A673 (cell line): ENCODE measurements at regions of chr10 and their contacts with region 1.

Region 1: DNA sequence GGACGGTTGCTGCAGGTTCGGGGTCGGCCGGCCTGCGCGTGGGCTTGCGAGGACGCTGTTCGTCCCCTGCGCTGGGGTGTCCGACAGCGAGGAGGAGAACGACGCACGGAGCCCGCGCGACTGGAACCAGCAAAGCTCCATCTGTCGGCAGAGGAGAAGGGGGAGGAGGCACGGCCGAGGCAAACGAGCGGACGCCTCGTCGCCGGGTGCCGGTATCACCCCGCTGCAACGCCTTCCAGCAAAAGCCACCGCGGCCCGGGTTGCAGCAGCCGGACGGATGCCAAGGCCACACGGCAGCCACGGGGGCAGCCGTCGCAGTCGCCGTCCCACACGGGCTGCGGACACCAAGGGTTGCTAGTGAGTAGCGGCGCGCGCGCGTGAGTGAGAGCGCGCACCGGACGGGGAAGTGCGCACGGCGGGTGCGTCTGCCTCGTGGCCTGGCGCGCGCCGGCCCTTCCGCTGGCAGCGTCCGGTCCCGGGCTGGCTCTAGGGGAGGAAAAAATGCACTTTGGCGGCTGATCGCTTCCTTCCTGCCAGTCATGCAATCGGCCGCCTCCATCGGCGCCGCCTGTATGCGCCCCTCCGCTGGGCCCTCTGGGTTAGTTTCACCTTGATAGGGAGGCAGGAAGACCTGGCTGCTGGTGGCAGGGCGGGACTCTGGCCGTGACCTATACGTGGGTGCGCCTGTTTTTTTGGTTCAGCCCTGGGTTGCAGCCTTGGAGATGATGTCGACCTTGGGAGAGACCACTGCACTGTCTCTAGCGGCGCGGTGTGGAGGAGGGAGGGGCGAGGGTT is 434 bp downstream of the STAMBPL1 start:
- DNase-seq: peak; percentile 84
- H3K4me3 ChIP-seq: peak overlapping the region; percentile 90
- H3K27ac ChIP-seq: peak overlapping the region; percentile 92
- H3K4me1 ChIP-seq: peaks cover 61% of the 10 kb centered on the region
- H3K27me3 ChIP-seq: no peaks in the 10 kb centered on the region
- CTCF ChIP-seq: peak; percentile 46

Region 2: DNA sequence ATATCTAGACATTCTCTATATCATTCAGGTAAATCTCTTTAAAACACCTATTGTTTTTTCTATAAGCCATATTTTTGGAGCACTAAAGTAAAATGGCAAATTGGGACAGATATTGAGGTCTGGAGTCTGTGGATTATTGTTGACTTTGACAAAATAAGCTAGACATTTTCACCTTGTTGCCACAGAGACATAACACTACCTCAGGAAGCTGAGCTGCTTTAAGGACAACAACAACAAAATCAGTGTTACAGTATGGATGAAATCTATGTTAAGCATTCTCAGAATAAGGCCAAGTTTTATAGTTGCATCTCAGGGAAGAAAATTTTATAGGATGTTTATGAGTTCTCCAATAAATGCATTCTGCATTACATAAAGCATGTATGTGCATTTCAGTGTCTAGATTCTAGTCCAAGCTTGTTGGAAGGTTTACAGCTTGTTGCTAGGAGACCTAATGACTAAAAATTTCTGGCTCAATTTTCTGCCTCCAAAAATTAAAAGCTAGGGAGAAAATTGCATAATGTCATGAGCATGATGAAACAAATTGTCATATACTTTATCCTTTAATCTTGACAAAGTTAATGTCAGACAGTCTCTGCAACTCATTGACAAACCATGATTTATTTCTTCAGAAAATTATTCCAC is 59.6 kb before region 1 on chr10:
- CTCF ChIA-PET with region 1: no interaction called
- POLR2A ChIA-PET with region 1: no interaction called
- intact Hi-C with region 1: no loop called
- DNase-seq: peak; percentile 41
- H3K4me3 ChIP-seq: no peak overlapping the region
- H3K27ac ChIP-seq: peak overlapping the region; percentile 51
- H3K4me1 ChIP-seq: peaks cover 26% of the 10 kb centered on the region
- H3K27me3 ChIP-seq: no peaks in the 10 kb centered on the region
- CTCF ChIP-seq: no peak

Region 3: GRCh38 chr10:88990384-88991160 is 110.1 kb after region 1 on chr10 and contains the start of gene FAS:
- CTCF ChIA-PET with region 1: no interaction called
- POLR2A ChIA-PET with region 1: no interaction called
- intact Hi-C with region 1: loop called (anchors 2 kb)
- DNase-seq: peak; percentile 66
- H3K4me3 ChIP-seq: peak within 1 kb of the TSS; percentile 89
- H3K27ac ChIP-seq: peak within 1 kb of the TSS; percentile 97
- H3K4me1 ChIP-seq: peaks cover 57% of the 10 kb centered on the region
- H3K27me3 ChIP-seq: no peaks in the 10 kb centered on the region
- CTCF ChIP-seq: no peak
- total RNA-seq, gene FAS: 30.4 and 40.3 TPM in 2 replicates